ENCODE measurements at regions of chr1 and their contacts with region 1.

Region 1: DNA sequence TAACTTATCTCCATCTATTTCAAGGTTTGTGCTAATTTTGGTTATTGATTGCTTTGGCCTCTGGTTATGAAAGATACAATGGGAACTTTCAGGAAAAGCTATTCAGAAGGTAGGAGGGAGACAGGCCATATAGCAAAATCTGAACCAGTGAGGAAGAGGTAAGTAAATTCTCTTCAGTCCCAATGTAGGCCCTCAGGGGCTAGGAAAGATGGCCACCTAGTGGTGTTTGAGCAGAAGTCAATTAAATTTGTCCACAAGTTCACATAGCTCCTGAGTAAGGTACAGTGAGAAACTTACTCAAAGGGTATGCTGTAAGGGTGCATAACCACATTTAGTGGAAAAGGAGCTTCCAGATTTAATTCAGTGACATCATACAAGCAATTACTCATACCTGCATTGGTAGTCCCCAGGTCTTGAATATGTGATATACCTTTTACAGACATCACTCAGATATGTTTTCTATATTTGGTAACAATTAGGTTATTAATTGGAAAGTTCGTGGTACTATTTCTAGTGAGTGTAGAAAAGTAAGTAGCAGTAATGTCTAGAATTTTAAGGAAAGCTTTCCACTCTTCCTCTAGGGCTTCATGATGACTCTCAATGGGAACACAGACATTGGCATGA is 21.4 kb upstream of the FMO1 start:
- DNase-seq: peak; percentile 81
- H3K4me3 ChIP-seq: no peak overlapping the region
- CTCF ChIP-seq: peak; percentile 76

Region 2: DNA sequence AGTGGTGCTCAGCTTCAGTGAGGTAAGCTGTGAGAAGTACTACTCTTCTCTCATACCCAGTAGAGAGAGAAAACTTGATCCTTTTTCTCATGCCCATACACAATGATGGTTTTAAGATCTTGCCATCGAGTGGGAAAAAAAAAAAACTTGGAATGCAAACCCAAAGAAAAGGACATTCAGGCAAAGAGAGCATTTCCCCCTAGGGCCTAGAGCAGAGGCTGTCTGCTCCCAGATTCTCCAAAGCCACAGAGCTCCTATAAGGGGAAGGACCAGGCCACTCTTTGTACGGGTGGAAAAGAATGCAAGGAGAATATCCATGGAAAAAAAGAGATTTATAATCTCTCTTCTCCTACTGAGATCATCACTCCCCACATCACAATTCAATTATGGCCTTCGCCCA is 256.6 kb before region 1 on chr1:
- in situ Hi-C with region 1: loop called (anchors 5 kb)
- DNase-seq: no peak
- H3K4me3 ChIP-seq: no peak overlapping the region
- CTCF ChIP-seq: no peak

Region 3: GRCh38 chr1:171081314-171081753 is 145.5 kb before region 1 on chr1:
- in situ Hi-C with region 1: loop called (anchors 5 kb)
- DNase-seq: peak; percentile 63
- H3K4me3 ChIP-seq: no peak overlapping the region
- CTCF ChIP-seq: no peak

Region 4: GRCh38 chr1:171127501-171127900 is 99.4 kb before region 1 on chr1:
- in situ Hi-C with region 1: loop called (anchors 5 kb)
- DNase-seq: peak; percentile 95
- H3K4me3 ChIP-seq: no peak overlapping the region
- CTCF ChIP-seq: no peak

Region 5: GRCh38 chr1:171188388-171189266 is 38.2 kb before region 1 on chr1:
- in situ Hi-C with region 1: no loop called
- DNase-seq: peak; percentile 33
- H3K4me3 ChIP-seq: no peak overlapping the region
- CTCF ChIP-seq: peak; percentile 68

Region 6: GRCh38 chr1:171595324-171595723 is 368.5 kb after region 1 on chr1:
- in situ Hi-C with region 1: no loop called
- DNase-seq: no peak
- H3K4me3 ChIP-seq: no peak overlapping the region
- CTCF ChIP-seq: no peak